ENCODE measurements at regions of chr7 and their contacts with region 1.

Region 1: DNA sequence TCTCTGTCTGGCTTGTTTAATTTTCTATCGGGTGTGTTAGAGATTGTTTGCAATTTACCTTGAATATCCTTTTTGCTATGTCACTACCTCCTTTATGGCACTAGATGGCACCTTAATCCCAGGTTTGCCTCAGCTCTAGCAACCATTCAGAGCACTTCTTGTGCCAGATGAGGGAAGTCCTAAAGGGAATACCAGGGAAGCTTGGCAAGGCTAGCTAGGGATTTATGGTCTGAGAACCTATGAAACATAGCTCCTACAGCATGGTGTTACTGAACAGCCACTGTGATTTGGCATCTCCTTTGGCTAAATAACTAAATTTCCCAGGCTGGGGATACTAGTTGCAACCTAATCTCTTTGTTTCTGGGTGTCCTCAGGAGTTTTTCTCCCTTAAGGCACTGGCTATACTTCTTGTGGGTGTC is 69.0 kb upstream of the VOPP1 start:
- DNase-seq: peak; percentile 78
- H3K4me3 ChIP-seq: no peak overlapping the region
- H3K27ac ChIP-seq: peak overlapping the region; percentile 73
- H3K4me1 ChIP-seq: peaks cover 4% of the 10 kb centered on the region
- H3K27me3 ChIP-seq: no peaks in the 10 kb centered on the region
- CTCF ChIP-seq: peak; percentile 80 to 82

Region 2: DNA sequence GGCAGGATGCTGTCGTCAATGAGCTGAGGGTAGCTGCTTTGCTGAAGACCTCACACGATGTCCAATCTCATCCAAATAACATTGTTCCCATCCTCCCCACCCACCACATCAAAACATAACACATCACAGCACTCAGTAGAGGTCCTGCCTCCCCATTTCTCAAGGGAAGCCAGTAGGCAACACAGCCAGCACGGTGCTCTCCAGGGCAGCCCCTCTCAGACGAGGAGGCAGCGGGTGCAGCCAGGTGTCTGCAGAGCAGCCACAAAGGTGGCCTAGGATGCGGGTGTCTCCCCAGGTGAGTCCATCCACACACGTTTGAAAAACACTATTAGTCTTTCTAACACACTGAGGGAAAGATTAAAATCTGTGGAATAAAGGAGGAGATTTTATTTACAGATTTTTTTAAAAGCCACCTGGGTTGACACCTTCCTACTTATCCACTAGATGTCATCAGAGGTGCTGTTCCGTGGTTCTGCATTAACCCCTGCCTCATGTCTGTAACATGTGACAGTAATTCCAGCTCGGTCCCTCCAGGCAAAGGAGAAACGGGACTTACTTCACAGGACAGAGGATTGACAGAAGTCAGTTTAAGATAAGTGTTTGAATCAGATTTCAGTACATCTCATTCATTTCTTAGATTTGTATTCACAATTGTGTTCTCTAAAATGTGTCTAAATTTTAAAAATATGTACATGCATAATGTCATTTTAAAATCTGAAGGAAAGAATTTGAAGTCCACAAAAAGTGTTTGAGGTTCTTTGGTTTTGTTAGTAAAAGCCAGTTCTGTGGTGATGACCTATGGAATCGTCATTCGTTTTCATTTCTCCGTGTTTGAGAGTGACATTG is 208.1 kb before region 1 on chr7:
- CTCF ChIA-PET with region 1: no interaction called
- dilution Hi-C with region 1: no loop called
- in situ Hi-C with region 1: no loop called
- intact Hi-C with region 1: loop called (anchors 1 kb)
- DNase-seq: peak; percentile 42
- H3K4me3 ChIP-seq: no peak overlapping the region
- H3K27ac ChIP-seq: no peak overlapping the region
- H3K4me1 ChIP-seq: no peaks in the 10 kb centered on the region
- H3K27me3 ChIP-seq: no peaks in the 10 kb centered on the region
- CTCF ChIP-seq: peak; percentile 41 to 70

Region 3: GRCh38 chr7:55557666-55558188 is 83.6 kb before region 1 on chr7:
- CTCF ChIA-PET with region 1: no interaction called
- dilution Hi-C with region 1: no loop called
- in situ Hi-C with region 1: no loop called
- intact Hi-C with region 1: no loop called
- DNase-seq: no peak
- H3K4me3 ChIP-seq: no peak overlapping the region
- H3K27ac ChIP-seq: no peak overlapping the region
- H3K4me1 ChIP-seq: no peaks in the 10 kb centered on the region
- H3K27me3 ChIP-seq: no peaks in the 10 kb centered on the region
- CTCF ChIP-seq: no peak

Region 4: DNA sequence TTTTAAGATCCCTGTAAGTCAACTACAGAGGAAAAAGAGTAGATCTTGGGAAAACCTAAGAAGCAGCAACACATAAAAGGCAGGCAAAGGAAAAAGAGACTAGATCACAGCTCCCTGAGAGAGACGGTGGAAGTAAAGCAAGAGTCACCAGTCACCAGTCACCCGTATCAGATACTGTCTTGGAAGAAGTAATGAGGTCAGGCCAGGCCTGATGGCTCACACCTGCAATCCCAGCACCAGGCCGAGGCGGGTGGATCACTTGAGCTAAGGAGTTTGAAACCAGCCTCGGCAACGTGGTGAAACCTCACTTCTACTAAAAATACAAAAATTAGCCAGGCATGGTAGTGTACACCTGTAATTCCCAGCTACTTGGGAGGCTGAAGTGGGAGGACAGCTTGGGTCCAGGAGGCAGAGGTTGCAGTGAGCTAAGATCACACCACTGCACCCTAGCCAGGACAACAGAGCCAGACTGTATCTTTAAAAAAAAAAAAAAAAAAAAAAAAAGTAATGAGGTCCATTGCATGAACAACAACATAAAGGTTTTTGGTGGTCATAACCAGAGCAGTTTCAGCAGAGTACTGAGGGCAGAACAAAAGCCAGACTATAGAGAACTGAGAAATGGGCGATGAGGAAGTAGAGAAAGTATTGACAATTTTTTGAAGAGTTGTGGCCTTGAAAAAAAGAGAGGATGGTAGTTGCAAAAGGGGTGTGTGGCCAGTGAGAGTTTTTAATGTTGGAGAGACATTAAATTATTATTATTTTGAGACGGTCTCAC is 262.9 kb after region 1 on chr7:
- CTCF ChIA-PET with region 1: no interaction called
- dilution Hi-C with region 1: no loop called
- in situ Hi-C with region 1: no loop called
- intact Hi-C with region 1: loop called (anchors 1 kb)
- DNase-seq: no peak
- H3K4me3 ChIP-seq: no peak overlapping the region
- H3K27ac ChIP-seq: no peak overlapping the region
- H3K4me1 ChIP-seq: no peaks in the 10 kb centered on the region
- H3K27me3 ChIP-seq: no peaks in the 10 kb centered on the region
- CTCF ChIP-seq: no peak

Region 5: GRCh38 chr7:55964261-55965099 is 323.2 kb after region 1 on chr7 and contains the start of gene NIPSNAP2:
- CTCF ChIA-PET with region 1: interaction called, 3 read pairs
- dilution Hi-C with region 1: no loop called
- in situ Hi-C with region 1: loop called in 1 of 2 experiments (anchors 25 kb)
- intact Hi-C with region 1: loop called (anchors 1 kb)
- DNase-seq: peak; percentile 30
- H3K4me3 ChIP-seq: peak within 1 kb of the TSS; percentile 51 to 64 (median 60)
- H3K27ac ChIP-seq: peak within 1 kb of the TSS; percentile 68
- H3K4me1 ChIP-seq: peaks cover 18% of the 10 kb centered on the region
- H3K27me3 ChIP-seq: no peaks in the 10 kb centered on the region
- CTCF ChIP-seq: peak; percentile 16 to 37
- total RNA-seq, gene NIPSNAP2: 56.5 to 60.7 TPM

Region 6: GRCh38 chr7:56003749-56004148 is 362.5 kb after region 1 on chr7:
- CTCF ChIA-PET with region 1: no interaction called
- dilution Hi-C with region 1: no loop called
- in situ Hi-C with region 1: no loop called
- intact Hi-C with region 1: loop called (anchors 2 kb)
- DNase-seq: no peak
- H3K4me3 ChIP-seq: no peak overlapping the region
- H3K27ac ChIP-seq: no peak overlapping the region
- H3K4me1 ChIP-seq: peaks cover 6% of the 10 kb centered on the region
- H3K27me3 ChIP-seq: no peaks in the 10 kb centered on the region
- CTCF ChIP-seq: no peak

Region 7: GRCh38 chr7:56079450-56080185 is 438.3 kb after region 1 on chr7:
- CTCF ChIA-PET with region 1: no interaction called
- dilution Hi-C with region 1: no loop called
- in situ Hi-C with region 1: loop called in 1 of 2 experiments (anchors 10 kb)
- intact Hi-C with region 1: loop called (anchors 1 kb)
- DNase-seq: no peak
- H3K4me3 ChIP-seq: no peak overlapping the region
- H3K27ac ChIP-seq: no peak overlapping the region
- H3K4me1 ChIP-seq: peaks cover 3% of the 10 kb centered on the region
- H3K27me3 ChIP-seq: no peaks in the 10 kb centered on the region
- CTCF ChIP-seq: peak; percentile 32 to 46

Region 8: GRCh38 chr7:56106108-56107073 is 465.1 kb after region 1 on chr7 and contains the start of gene CHCHD2:
- CTCF ChIA-PET with region 1: no interaction called
- dilution Hi-C with region 1: loop called (anchors 5 kb)
- in situ Hi-C with region 1: no loop called
- intact Hi-C with region 1: no loop called
- DNase-seq: peak; percentile 98
- H3K4me3 ChIP-seq: peak within 1 kb of the TSS; percentile 82 to 99 (median 95)
- H3K27ac ChIP-seq: peak within 1 kb of the TSS; percentile 98
- H3K4me1 ChIP-seq: no peaks in the 10 kb centered on the region
- H3K27me3 ChIP-seq: no peaks in the 10 kb centered on the region
- CTCF ChIP-seq: no peak
- total RNA-seq, gene CHCHD2: 197 to 352 TPM